T-cell (primary cell): ENCODE measurements at regions of chr6 and their contacts with region 1.

Region 1: DNA sequence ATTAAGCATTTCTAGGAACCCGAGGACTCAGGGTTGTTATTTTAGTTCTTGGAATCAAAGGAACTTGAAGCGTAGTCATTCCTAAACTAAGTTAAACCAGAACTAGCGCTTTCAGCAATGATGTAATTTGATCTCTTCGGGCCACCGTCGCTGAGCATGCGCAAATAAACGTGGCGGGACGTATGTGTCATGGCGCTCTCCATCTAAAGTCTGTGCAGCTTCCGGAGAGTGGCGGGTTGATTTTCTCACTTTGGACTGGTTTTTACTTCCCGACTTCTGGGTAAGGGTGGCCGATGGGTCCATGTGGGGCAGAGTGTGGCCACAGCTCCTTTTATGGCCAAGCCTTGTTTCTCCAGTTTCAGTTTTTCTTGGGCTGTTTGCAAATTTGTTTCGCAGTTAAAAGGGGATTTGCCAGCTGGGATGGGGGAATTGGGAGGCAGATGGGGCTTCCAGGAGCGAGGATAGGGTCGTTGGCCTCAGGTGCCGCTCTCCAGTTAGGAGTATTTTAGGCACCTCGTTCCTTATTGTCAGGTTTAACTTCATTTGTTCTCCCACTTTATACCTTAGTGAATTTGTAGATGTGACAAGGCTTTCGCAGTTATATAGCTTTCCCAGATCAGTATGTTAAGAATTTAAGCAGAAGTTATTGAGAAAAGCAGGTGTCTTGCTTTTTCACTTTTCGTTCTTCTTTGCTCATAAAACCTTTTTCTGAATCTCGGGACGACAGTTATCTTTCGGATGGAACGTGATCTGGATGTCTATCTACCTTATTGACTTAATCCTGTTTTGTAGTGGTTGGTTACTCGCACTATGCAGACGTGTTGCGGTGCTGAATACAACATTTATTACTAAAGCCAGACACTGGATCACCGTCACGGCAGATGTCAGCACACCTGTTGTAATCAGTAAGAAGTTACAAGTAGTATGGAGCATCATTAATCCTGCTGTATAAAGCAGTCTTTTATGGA is at the start of gene CDKAL1:
- DNase-seq: peak; percentile 73 to 94 (median 85)
- ATAC-seq: peak; percentile 87 to 93 (median 91)
- H3K4me3 ChIP-seq: peak within 1 kb of the TSS; percentile 94 to 100
- H3K4me3 Mint-ChIP-seq: peak within 1 kb of the TSS; percentile 95 to 98 (median 98)
- H3K27ac ChIP-seq: peak within 1 kb of the TSS; percentile 92
- H3K27ac Mint-ChIP-seq: peak within 1 kb of the TSS; percentile 94 to 98
- H3K4me1 ChIP-seq: peaks cover 7 to 14% of the 10 kb centered on the region in 2 experiments
- H3K4me1 Mint-ChIP-seq: peaks cover 41 to 42% (median 42%) of the 10 kb centered on the region in 3 donors
- H3K27me3 ChIP-seq: peaks cover 0 to 6% of the 10 kb centered on the region in 2 experiments
- H3K27me3 Mint-ChIP-seq: peaks cover 2 to 6% of the 10 kb centered on the region in 2 donors
- total RNA-seq, gene CDKAL1: 18.8 to 29.9 (median 20.5) TPM

Region 2: DNA sequence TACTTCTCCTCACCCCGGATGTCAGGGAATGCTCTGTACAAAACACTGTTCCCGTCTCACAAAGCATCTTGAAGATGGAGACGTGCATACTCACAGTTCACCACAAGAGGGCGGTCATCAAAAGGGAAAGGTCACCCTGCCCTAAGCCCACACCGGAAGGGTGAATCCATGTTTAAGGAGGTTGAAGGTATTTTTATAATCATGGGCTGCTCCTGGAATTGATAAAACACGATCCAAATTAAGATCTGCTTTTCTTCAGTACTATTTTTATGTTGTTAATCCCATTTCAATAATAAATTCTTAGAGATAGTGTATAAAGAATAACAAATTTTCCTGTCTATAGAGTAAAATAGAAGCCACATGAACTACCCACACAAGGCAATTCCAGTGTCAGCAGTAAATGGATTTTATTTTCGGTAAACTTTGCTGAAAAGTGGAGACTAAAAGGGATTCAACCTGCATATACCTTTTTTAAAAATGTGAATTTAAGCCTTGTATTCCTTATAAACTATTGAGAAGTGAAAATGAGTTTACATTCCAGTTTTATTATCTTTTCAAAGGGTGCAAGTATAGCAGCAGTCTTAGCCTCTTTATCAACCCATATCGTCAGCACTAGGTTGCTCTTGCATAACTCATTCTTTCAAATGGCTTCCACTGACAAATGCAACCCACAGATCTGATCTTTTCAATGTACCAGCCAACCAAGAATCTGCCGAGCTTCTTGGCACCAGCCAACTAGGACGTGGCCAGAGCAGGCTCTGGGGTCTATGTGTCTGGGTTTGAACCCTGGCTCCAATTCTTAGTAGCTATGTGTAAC is 242.6 kb before region 1 on chr6:
- CTCF ChIA-PET with region 1: interaction called, 3 to 12 read pairs
- POLR2A ChIA-PET with region 1: no interaction called
- DNase-seq: peak; percentile 19 to 88 (median 61)
- ATAC-seq: peak; percentile 79 to 87 (median 86)
- H3K4me3 ChIP-seq: no peak overlapping the region
- H3K4me3 Mint-ChIP-seq: peak overlapping the region in 1 of 3 donors; percentile 17
- H3K27ac ChIP-seq: no peak overlapping the region
- H3K27ac Mint-ChIP-seq: peak overlapping the region; percentile 66 to 71
- H3K4me1 ChIP-seq: peaks cover 10 to 16% of the 10 kb centered on the region in 2 experiments
- H3K4me1 Mint-ChIP-seq: peaks cover 20 to 26% (median 22%) of the 10 kb centered on the region in 3 donors
- H3K27me3 ChIP-seq: no peaks in the 10 kb centered on the region
- H3K27me3 Mint-ChIP-seq: no peaks in the 10 kb centered on the region

Region 3: DNA sequence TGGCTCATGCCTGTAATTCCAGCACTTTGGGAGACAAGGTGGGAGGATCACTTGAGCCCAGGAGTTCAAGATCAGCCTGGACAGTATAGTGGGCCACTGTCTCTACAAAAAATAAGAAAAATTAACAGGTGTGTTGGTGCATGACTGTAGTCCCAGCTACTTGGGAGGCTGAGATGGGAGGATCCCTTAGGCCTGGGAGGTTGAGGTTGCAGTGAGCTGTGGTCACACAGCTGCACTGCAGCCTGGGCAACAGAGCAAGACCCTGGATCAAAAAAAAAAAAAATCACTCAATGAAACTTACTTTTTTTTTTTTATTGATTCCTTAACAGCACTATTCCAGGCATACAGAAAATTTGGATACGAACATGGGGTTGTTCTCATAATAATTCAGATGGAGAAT is 13.7 kb after region 1 on chr6:
- CTCF ChIA-PET with region 1: no interaction called
- POLR2A ChIA-PET with region 1: no interaction called
- DNase-seq: no peak
- ATAC-seq: no peak
- H3K4me3 ChIP-seq: no peak overlapping the region
- H3K4me3 Mint-ChIP-seq: no peak overlapping the region
- H3K27ac ChIP-seq: no peak overlapping the region
- H3K27ac Mint-ChIP-seq: no peak overlapping the region
- H3K4me1 ChIP-seq: peaks cover 0 to under 1% of the 10 kb centered on the region in 2 experiments
- H3K4me1 Mint-ChIP-seq: peaks cover 6 to 15% (median 12%) of the 10 kb centered on the region in 3 donors
- H3K27me3 ChIP-seq: no peaks in the 10 kb centered on the region
- H3K27me3 Mint-ChIP-seq: no peaks in the 10 kb centered on the region